CD8-positive, alpha-beta T cell (primary cell): ENCODE measurements at regions of chr20 and their contacts with region 1.

Region 1: GRCh38 chr20:50085452-50086365 is 27.2 kb downstream of the UBE2V1 start:
- DNase-seq: peak in 8 of 9 experiments; percentile 20 to 75 (median 38)
- ATAC-seq: peak; percentile 84
- H3K4me3 ChIP-seq: peak overlapping the region; percentile 29 to 38
- H3K4me3 Mint-ChIP-seq: peak overlapping the region; percentile 82
- H3K27ac ChIP-seq: peak overlapping the region; percentile 5 to 50
- H3K27ac Mint-ChIP-seq: peak overlapping the region; percentile 88
- H3K4me1 ChIP-seq: peaks cover 12% of the 10 kb centered on the region
- H3K4me1 Mint-ChIP-seq: peaks cover 35% of the 10 kb centered on the region
- H3K27me3 ChIP-seq: no peaks in the 10 kb centered on the region
- H3K27me3 Mint-ChIP-seq: no peaks in the 10 kb centered on the region
- CTCF ChIP-seq: peak; percentile 83

Region 2: GRCh38 chr20:50101887-50102286 is 16.2 kb after region 1 on chr20:
- CTCF ChIA-PET with region 1: interaction called, 37 read pairs
- POLR2A ChIA-PET with region 1: no interaction called
- intact Hi-C with region 1: no loop called
- DNase-seq: no peak
- ATAC-seq: no peak
- H3K4me3 ChIP-seq: no peak overlapping the region
- H3K4me3 Mint-ChIP-seq: no peak overlapping the region
- H3K27ac ChIP-seq: no peak overlapping the region
- H3K27ac Mint-ChIP-seq: peak overlapping the region; percentile 12
- H3K4me1 ChIP-seq: peaks cover 15% of the 10 kb centered on the region
- H3K4me1 Mint-ChIP-seq: peaks cover 67% of the 10 kb centered on the region
- H3K27me3 ChIP-seq: no peaks in the 10 kb centered on the region
- H3K27me3 Mint-ChIP-seq: no peaks in the 10 kb centered on the region
- CTCF ChIP-seq: no peak

Region 3: DNA sequence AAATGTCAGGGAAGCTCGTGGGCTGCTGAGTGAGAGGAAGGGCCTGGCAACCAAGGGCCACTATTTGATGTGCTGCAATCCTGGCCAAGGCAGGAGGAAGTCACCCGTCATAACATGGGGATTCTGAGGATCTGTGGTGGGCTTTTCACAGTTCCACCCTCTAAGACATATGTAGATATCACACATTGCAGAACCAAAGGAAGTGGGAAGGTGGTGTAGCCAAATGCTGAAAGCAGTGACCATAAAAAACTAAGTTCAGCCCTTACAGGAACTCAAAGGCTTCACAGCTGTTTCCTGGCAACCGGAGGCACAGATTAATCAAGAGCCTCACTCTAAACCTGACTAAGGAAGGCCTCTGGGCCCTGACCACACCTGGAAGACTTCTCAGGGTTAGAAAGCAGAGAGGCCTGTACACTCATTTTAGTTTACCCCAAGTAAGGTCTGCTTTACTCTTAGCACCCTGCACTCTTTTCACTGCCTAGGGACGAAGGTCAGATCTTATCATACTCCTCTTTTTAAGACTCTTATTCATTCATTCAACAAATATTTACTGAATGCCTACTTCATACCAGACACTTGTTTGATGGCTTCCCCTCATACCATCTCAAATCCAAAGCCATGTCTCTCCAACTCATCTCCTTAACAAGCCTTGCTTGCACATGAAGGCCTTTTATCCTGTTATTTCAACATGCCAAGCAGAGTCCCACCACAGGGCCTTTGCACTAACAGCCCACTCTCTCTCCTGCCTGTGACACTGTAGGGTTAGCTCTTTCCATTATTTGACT is 24.6 kb after region 1 on chr20:
- CTCF ChIA-PET with region 1: interaction called, 10 read pairs
- POLR2A ChIA-PET with region 1: no interaction called
- intact Hi-C with region 1: no loop called
- DNase-seq: peak in 8 of 9 experiments; percentile 9 to 91 (median 56)
- ATAC-seq: peak; percentile 37
- H3K4me3 ChIP-seq: peak overlapping the region; percentile 7 to 21
- H3K4me3 Mint-ChIP-seq: peak overlapping the region; percentile 97
- H3K27ac ChIP-seq: peak overlapping the region; percentile 31 to 83
- H3K27ac Mint-ChIP-seq: peak overlapping the region; percentile 88
- H3K4me1 ChIP-seq: peaks cover 72% of the 10 kb centered on the region
- H3K4me1 Mint-ChIP-seq: peaks cover 87% of the 10 kb centered on the region
- H3K27me3 ChIP-seq: no peaks in the 10 kb centered on the region
- H3K27me3 Mint-ChIP-seq: no peaks in the 10 kb centered on the region
- CTCF ChIP-seq: no peak

Region 4: GRCh38 chr20:50346372-50347283 is 260.9 kb after region 1 on chr20:
- CTCF ChIA-PET with region 1: no interaction called
- POLR2A ChIA-PET with region 1: no interaction called
- intact Hi-C with region 1: no loop called
- DNase-seq: peak in 2 of 9 experiments; percentile 27 to 29
- ATAC-seq: no peak
- H3K4me3 ChIP-seq: no peak overlapping the region
- H3K4me3 Mint-ChIP-seq: no peak overlapping the region
- H3K27ac ChIP-seq: no peak overlapping the region
- H3K27ac Mint-ChIP-seq: no peak overlapping the region
- H3K4me1 ChIP-seq: peaks cover 9% of the 10 kb centered on the region
- H3K4me1 Mint-ChIP-seq: peaks cover 8% of the 10 kb centered on the region
- H3K27me3 ChIP-seq: no peaks in the 10 kb centered on the region
- H3K27me3 Mint-ChIP-seq: peaks cover 8% of the 10 kb centered on the region
- CTCF ChIP-seq: no peak